CD8-positive, alpha-beta T cell (primary cell): ENCODE measurements at regions of chr14 and their contacts with region 1.

Region 1: GRCh38 chr14:70972107-70972976 is 65.1 kb downstream of the PCNX1 start:
- DNase-seq: peak; percentile 65 to 90 (median 85)
- ATAC-seq: peak; percentile 81
- H3K4me3 ChIP-seq: no peak overlapping the region
- H3K4me3 Mint-ChIP-seq: no peak overlapping the region
- H3K27ac ChIP-seq: peak overlapping the region in 1 of 2 experiments; percentile 0
- H3K27ac Mint-ChIP-seq: peak overlapping the region; percentile 53
- H3K4me1 ChIP-seq: peaks cover 25% of the 10 kb centered on the region
- H3K4me1 Mint-ChIP-seq: peaks cover 48% of the 10 kb centered on the region
- H3K27me3 ChIP-seq: no peaks in the 10 kb centered on the region
- H3K27me3 Mint-ChIP-seq: no peaks in the 10 kb centered on the region
- CTCF ChIP-seq: peak; percentile 81

Region 2: DNA sequence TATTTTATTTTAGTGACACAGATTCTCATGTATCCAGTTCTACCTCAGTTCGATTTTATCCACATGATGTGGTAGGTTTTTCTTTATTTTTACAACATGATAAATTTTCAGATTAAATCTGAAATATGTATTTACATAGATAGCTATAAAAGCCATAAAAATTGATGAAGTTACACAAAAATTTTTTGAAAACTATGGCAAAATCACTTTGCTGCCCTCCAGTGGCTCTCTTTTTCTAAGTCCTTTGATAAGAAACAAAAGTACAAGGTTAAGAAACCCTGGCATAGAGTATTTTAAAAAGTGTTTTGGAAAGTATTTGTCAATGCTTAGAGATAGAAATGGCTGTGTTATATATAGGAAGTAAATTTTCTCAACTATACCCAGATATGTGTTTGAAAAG is 39.1 kb after region 1 on chr14:
- CTCF ChIA-PET with region 1: interaction called, 10 read pairs
- POLR2A ChIA-PET with region 1: no interaction called
- intact Hi-C with region 1: loop called in 1 of 2 experiments (anchors 5 kb)
- DNase-seq: peak in 2 of 9 experiments; percentile 10 to 31
- ATAC-seq: no peak
- H3K4me3 ChIP-seq: no peak overlapping the region
- H3K4me3 Mint-ChIP-seq: no peak overlapping the region
- H3K27ac ChIP-seq: peak overlapping the region in 1 of 2 experiments; percentile 6
- H3K27ac Mint-ChIP-seq: peak overlapping the region; percentile 58
- H3K4me1 ChIP-seq: peaks cover 18% of the 10 kb centered on the region
- H3K4me1 Mint-ChIP-seq: peaks cover 48% of the 10 kb centered on the region
- H3K27me3 ChIP-seq: no peaks in the 10 kb centered on the region
- H3K27me3 Mint-ChIP-seq: no peaks in the 10 kb centered on the region
- CTCF ChIP-seq: peak; percentile 55